Head of caudate nucleus (tissue), 42 donors: ENCODE measurements at regions of chr15 and their contacts with region 1.

Region 1: DNA sequence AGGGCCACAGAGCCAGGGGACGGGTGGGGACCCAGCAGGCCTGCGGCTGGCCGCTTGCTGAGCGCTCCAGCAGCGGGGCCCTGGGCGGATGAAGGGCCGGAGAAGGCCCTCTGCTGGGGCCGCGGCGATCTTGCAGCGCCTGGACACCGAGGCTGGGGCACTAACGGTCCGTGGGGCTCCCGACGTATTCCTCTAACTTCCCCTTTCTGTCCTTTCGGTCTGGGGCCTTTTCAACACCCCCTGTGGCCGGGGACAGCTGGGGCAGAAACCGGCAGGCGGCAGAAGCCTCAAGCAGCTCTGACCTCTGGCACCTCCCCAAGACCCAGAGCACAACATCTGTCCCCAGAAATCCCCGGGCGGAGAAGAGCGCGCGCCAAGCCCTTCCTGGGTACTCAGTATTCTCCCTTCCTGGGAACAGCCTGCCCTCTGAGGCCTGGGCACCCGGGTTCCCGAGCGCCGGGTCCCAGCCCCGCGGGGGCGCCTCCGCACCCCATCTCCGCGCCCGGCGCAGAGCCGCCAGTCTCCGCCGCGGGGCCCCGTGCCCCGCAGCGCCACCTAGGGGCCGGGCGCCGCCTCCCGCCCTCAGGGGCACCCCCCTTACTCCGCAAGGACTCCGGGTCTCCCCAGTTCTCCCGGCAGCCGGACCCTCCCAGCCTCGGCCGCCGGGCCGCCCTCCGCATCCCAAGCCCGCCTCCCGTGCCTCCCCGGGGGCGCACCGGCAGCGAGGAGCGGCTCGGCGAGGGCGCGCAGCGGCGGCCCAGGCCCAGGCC is 582 bp upstream of the SLCO3A1 start:
- DNase-seq: peak; percentile 57 to 92 (median 81)

Region 2: DNA sequence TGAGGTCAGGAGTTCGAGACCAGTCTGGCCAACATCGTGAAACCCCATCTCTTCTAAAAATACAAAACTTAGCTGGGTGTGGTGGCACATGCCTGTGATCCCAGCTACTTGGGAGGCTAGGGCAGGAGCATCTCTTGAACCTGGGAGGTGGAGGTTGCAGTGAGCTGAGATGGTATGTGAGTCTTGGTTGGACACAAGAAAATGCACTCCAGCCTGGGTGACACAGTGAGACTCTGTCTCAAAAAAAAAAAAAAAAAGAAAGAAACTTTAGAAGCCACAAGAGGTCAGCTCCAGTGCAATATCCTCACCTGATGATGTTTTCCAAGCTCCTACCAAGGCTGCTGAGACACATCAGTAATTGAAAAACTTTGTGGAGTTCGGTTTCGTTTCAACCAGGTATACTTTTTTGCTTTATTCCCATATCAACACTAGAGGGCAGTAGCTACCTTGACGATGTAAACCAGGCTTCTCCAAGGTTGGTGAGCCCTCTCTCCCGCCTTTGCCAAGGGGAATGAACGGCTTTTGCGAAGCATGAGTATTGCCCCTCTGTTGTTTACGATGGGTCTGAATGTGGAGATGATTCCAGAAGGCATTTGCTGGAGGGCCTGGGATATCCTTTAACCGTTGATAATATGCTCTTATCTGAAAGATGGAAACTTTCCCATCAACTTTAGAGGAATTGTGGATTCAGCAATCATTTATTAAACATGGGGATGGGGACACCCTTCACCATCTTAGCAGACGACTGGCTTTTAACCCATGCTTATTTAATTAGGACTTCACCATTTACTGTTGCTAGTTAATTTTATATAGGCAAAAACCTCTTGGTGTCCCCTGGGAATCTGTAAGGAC is 550.1 kb before region 1 on chr15:
- intact Hi-C with region 1: loop called (anchors 10 kb)
- DNase-seq: peak in 41 of 42 donors; percentile 6 to 79 (median 45)

Region 3: DNA sequence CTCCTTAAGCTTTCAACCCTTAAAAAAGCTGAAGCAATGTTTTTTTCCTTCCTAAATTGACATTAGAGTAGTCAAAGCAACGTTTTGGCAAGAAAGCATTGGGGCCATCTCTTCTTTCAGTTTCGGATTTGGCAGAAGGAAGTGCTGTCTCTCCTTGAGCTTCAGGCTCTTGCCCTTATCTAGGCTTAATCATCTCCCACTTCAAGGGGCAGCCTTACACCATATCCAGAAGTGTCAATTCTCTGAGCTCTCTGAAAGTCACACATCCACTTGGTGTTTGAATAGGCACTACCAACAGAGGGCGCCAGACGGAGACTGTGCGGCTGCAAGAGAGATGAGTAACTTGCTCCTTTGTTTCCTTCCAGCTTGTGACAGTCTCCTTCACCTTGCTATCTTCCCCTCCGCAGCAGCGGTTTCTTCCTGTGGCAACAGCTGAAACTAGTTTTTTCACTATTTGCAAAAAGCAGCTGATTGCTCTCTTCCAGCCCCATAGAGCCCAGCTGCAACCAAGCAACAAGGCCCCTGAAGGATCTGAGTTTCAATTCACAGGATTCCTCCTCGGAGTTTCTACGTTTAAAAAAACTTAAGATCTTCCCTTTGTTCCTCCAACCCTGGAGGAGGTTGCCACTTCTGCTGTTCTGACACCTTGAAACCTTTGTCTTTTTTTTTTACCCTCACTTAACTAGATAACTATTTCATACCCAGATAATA is 146.4 kb before region 1 on chr15:
- intact Hi-C with region 1: loop called (anchors 10 kb)
- DNase-seq: peak; percentile 66 to 96 (median 87)

Region 4: DNA sequence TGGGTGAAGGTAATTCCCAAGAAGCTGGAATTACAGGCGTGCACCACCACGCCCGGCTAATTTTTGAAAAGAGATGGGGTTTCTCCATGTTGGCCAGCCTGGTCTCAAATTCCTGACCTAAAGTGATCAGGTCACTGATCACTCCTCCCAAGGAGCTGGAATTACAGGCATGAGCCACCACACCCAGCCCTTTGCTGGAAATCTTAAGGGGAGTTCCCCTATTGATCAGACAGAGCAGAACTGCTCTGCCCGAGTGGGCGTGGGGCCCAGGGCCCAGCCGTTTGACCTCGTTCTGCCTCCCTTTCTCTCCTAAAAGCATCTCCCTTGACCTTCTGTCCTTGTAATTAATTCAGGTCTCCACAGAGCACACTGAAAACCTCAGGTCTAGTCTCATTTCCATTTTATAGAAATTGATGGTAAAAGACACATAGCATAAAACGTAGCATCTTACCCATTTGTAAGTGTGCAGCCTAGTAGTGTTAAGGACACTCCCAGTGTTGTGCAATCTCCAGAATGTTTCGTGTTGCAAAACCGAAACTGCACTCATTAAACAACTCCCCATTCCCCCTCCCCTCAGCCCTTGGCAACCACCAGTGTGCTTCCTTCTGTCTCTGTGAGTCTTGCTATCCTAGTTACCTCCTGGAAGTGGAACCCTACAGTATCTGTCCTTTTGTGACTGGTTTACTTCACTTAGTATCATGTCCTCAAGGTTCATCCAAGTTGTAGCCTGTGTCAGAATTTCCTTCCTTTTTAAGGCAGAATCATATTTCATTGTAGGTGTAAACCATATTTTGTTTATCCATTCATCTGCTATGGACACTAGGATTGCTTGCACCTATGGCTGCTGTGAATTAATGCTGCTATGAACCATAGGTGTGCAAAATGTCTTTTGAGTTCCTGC is 90.0 kb after region 1 on chr15:
- intact Hi-C with region 1: loop called (anchors 10 kb)
- DNase-seq: peak in 25 of 42 donors; percentile 23 to 78 (median 49)

Region 5: GRCh38 chr15:92077353-92078085 is 224.6 kb after region 1 on chr15:
- intact Hi-C with region 1: loop called (anchors 5 kb)
- DNase-seq: peak; percentile 56 to 90 (median 78)